Natural killer cell (primary cell): ENCODE measurements at regions of chr11 and their contacts with region 1.

Region 1: DNA sequence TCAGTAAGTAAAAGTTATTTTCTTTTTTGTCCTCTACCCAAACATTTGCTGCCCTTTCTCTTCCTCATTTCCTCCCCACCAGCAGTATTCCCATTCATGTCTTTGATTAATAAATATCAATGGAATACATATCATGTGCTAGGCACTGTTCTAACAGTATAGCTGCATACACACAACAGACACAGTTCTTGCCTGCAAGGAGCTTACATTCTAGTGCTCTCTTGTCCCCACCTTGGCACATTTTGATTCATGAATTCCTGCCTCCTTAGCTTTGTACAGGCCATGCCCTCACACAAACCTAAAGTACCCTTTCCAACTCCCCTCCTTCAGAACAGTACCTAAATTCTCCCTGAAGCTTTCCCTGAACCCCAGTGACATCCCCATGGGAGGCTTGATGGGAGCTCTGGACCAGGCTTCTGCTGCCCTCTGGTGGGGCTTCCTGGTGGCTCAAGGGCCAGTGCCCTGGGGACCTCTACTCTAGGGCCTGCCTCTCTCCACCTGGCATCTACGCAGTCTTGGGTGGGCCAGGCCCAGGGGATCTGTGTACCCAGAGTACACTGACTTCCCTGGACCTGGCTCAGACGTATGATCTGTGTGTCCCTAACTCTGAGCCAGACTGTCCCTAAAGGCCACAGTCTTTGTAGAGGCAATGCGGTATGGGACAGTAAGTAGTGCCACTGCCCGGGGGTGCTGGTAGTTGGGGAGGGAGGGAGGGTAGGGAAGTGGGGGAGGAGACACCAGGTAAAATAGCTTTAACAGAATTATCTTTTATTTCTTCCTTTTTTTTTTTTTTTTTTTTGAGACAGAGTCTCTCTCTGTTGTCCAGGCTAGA is 14.1 kb downstream of the RPS13 start:
- DNase-seq: peak in 1 of 2 donors; percentile 58
- ATAC-seq: peak in 2 of 3 donors; percentile 57 to 76
- H3K4me3 ChIP-seq: no peak overlapping the region
- H3K4me3 Mint-ChIP-seq: no peak overlapping the region
- H3K27ac ChIP-seq: no peak overlapping the region
- H3K27ac Mint-ChIP-seq: no peak overlapping the region
- H3K4me1 ChIP-seq: no peaks in the 10 kb centered on the region
- H3K4me1 Mint-ChIP-seq: no peaks in the 10 kb centered on the region
- H3K27me3 ChIP-seq: no peaks in the 10 kb centered on the region
- H3K27me3 Mint-ChIP-seq: no peaks in the 10 kb centered on the region
- CTCF ChIP-seq: no peak

Region 2: GRCh38 chr11:16820324-16821092 is 242.9 kb before region 1 on chr11:
- intact Hi-C with region 1: loop called (anchors 2 kb)
- DNase-seq: peak in 1 of 2 donors; percentile 66
- ATAC-seq: peak; percentile 61 to 76 (median 65)
- H3K4me3 ChIP-seq: no peak overlapping the region
- H3K4me3 Mint-ChIP-seq: no peak overlapping the region
- H3K27ac ChIP-seq: no peak overlapping the region
- H3K27ac Mint-ChIP-seq: no peak overlapping the region
- H3K4me1 ChIP-seq: peaks cover 8% of the 10 kb centered on the region
- H3K4me1 Mint-ChIP-seq: peaks cover 0 to 6% of the 10 kb centered on the region in 2 donors
- H3K27me3 ChIP-seq: no peaks in the 10 kb centered on the region
- H3K27me3 Mint-ChIP-seq: no peaks in the 10 kb centered on the region
- CTCF ChIP-seq: peak; percentile 80

Region 3: DNA sequence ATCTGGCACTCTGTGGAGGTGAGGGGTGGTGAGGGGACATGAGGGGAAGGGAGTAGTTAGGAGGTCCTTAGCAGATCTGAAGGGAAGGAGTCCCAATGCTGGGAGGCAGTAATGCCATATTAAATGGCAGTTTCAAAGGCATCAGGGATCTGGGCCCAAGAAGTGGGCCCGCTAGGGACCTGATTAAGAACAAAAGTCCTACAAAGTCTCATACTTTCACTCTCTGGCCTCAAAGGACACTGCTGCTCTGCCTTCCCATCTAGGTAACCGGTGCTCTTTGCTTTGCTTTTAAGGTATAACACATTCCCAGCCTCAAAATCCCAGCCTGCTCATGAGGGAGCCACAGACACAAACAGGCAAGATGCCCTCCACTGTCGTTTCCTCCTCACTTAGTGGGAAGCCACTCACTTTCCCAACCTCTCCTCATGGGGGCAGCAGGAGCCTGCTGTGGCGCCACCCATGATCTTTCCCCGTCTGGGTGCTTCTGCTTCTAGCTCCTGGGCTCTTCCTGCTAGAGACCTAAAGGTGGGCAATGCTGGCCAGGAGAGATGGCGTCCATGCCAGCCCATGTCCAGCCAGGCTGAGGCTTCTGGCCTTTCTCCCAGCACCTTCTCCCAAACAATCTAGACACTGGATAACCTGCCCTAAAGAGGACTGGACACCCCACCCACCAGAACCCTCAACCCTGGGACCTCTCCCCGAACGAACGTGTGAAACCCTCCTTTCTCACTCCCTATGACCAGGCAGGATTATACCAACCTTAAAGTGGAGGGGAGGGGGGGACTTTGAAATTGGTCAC is 117.5 kb before region 1 on chr11:
- intact Hi-C with region 1: loop called (anchors 5 kb)
- DNase-seq: peak in 1 of 2 donors; percentile 58
- ATAC-seq: peak in 2 of 3 donors; percentile 54 to 66
- H3K4me3 ChIP-seq: no peak overlapping the region
- H3K4me3 Mint-ChIP-seq: no peak overlapping the region
- H3K27ac ChIP-seq: no peak overlapping the region
- H3K27ac Mint-ChIP-seq: no peak overlapping the region
- H3K4me1 ChIP-seq: no peaks in the 10 kb centered on the region
- H3K4me1 Mint-ChIP-seq: no peaks in the 10 kb centered on the region
- H3K27me3 ChIP-seq: no peaks in the 10 kb centered on the region
- H3K27me3 Mint-ChIP-seq: no peaks in the 10 kb centered on the region
- CTCF ChIP-seq: peak; percentile 17

Region 4: GRCh38 chr11:17026487-17027082 is 36.8 kb before region 1 on chr11:
- intact Hi-C with region 1: no loop called
- DNase-seq: no peak
- ATAC-seq: no peak
- H3K4me3 ChIP-seq: no peak overlapping the region
- H3K4me3 Mint-ChIP-seq: no peak overlapping the region
- H3K27ac ChIP-seq: no peak overlapping the region
- H3K27ac Mint-ChIP-seq: no peak overlapping the region
- H3K4me1 ChIP-seq: no peaks in the 10 kb centered on the region
- H3K4me1 Mint-ChIP-seq: no peaks in the 10 kb centered on the region
- H3K27me3 ChIP-seq: no peaks in the 10 kb centered on the region
- H3K27me3 Mint-ChIP-seq: peaks cover 0 to 4% of the 10 kb centered on the region in 2 donors
- CTCF ChIP-seq: no peak

Region 5: GRCh38 chr11:17116121-17116520 is 52.7 kb after region 1 on chr11:
- intact Hi-C with region 1: no loop called
- DNase-seq: no peak
- ATAC-seq: peak; percentile 58 to 84 (median 74)
- H3K4me3 ChIP-seq: no peak overlapping the region
- H3K4me3 Mint-ChIP-seq: no peak overlapping the region
- H3K27ac ChIP-seq: no peak overlapping the region
- H3K27ac Mint-ChIP-seq: peak overlapping the region; percentile 2 to 9
- H3K4me1 ChIP-seq: no peaks in the 10 kb centered on the region
- H3K4me1 Mint-ChIP-seq: peaks cover 11 to 17% of the 10 kb centered on the region in 2 donors
- H3K27me3 ChIP-seq: no peaks in the 10 kb centered on the region
- H3K27me3 Mint-ChIP-seq: no peaks in the 10 kb centered on the region
- CTCF ChIP-seq: no peak